Heart left ventricle (tissue), 16 donors: ENCODE measurements at regions of chr18 and their contacts with region 1.

Region 1: GRCh38 chr18:13416208-13416607 is 197.6 kb downstream of the LDLRAD4 start:
- DNase-seq: no peak
- ATAC-seq: peak; percentile 17 to 68 (median 34)
- H3K4me3 ChIP-seq: no peak overlapping the region
- H3K27ac ChIP-seq: peak overlapping the region in 9 of 12 donors; percentile 1 to 70 (median 50)
- H3K4me1 ChIP-seq: peaks cover 7 to 65% (median 46%) of the 10 kb centered on the region in 12 donors
- H3K27me3 ChIP-seq: no peaks in the 10 kb centered on the region
- CTCF ChIP-seq: no peak
- POLR2A ChIP-seq: no peak

Region 2: DNA sequence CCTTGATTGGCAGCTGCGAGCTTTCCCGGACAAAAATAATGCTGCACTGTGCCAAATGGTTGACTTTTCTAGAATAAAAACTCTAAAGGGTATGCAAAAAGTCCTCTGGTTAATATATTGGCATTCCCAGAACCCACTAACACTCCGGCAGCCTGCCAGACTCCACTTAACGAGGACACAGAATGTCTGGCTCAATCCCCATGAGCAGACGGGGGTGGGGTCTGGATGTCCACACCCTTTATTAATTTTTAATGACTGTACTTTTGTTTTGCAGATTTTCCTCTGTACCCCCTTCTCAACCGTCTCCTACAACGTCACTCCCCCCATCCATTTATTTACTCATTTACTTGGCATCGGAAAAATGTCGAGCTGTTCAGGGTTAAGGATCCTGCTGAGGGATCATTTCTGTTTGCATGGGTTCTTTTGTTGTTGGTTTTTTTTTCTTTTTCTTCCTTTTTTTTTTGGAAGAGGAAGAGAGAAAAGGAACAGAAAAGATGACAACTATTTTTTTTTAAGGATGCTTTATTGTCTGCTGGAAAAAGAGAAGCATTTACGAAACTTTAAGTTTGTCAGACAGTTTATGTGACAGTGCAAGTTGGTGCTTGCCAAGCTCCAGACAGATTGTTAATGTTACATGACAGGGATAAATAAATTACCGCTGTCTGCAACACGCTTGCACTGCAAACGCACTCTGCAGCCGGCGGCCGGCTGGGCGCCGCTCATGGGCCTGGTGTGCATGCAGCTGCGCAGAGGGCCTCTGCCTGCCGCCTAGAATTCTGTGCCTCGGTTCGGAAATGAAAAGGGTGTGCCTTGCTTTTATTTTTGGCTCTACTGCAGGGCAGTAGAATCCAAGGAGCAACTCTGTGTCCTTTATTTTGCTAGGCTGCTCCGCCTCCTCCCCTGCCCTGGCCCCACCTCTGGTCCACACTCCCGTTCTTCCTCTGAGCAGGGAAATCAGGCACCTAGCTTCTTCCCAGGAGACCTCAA is 194.0 kb before region 1 on chr18:
- intact Hi-C with region 1: loop called in 2 of 10 experiments (anchors 2 to 10 kb)
- DNase-seq: peak; percentile 77 to 90 (median 84)
- ATAC-seq: peak; percentile 33 to 68 (median 59)
- H3K4me3 ChIP-seq: peak overlapping the region in 10 of 12 donors; percentile 15 to 38 (median 20)
- H3K27ac ChIP-seq: peak overlapping the region; percentile 70 to 95 (median 91)
- H3K4me1 ChIP-seq: peaks cover 14 to 69% (median 58%) of the 10 kb centered on the region in 12 donors
- H3K27me3 ChIP-seq: no peaks in the 10 kb centered on the region
- CTCF ChIP-seq: no peak
- POLR2A ChIP-seq: no peak

Region 3: GRCh38 chr18:13353084-13353823 is 63.0 kb before region 1 on chr18:
- intact Hi-C with region 1: loop called in 2 of 10 experiments (anchors 10 kb)
- DNase-seq: no peak
- ATAC-seq: peak in 3 of 4 donors; percentile 22 to 32 (median 31)
- H3K4me3 ChIP-seq: no peak overlapping the region
- H3K27ac ChIP-seq: peak overlapping the region in 3 of 12 donors; percentile 27 to 66 (median 37)
- H3K4me1 ChIP-seq: peaks cover 0 to 26% (median 8%) of the 10 kb centered on the region in 12 donors
- H3K27me3 ChIP-seq: no peaks in the 10 kb centered on the region
- CTCF ChIP-seq: no peak
- POLR2A ChIP-seq: no peak

Region 4: GRCh38 chr18:13500227-13500865 is 84.1 kb after region 1 on chr18:
- intact Hi-C with region 1: loop called in 1 of 10 experiments (anchors 10 kb)
- DNase-seq: peak; percentile 51 to 76 (median 66)
- ATAC-seq: peak; percentile 69 to 84 (median 80)
- H3K4me3 ChIP-seq: peak overlapping the region in 10 of 12 donors; percentile 7 to 47 (median 36)
- H3K27ac ChIP-seq: peak overlapping the region; percentile 35 to 93 (median 83)
- H3K4me1 ChIP-seq: peaks cover 5 to 50% (median 36%) of the 10 kb centered on the region in 12 donors
- H3K27me3 ChIP-seq: no peaks in the 10 kb centered on the region
- CTCF ChIP-seq: peak in 3 of 12 donors; percentile 23 to 29 (median 26)
- POLR2A ChIP-seq: peak in 1 of 2 donors; percentile 22